ENCODE measurements at regions of chr15 and their contacts with region 1.

Region 1: DNA sequence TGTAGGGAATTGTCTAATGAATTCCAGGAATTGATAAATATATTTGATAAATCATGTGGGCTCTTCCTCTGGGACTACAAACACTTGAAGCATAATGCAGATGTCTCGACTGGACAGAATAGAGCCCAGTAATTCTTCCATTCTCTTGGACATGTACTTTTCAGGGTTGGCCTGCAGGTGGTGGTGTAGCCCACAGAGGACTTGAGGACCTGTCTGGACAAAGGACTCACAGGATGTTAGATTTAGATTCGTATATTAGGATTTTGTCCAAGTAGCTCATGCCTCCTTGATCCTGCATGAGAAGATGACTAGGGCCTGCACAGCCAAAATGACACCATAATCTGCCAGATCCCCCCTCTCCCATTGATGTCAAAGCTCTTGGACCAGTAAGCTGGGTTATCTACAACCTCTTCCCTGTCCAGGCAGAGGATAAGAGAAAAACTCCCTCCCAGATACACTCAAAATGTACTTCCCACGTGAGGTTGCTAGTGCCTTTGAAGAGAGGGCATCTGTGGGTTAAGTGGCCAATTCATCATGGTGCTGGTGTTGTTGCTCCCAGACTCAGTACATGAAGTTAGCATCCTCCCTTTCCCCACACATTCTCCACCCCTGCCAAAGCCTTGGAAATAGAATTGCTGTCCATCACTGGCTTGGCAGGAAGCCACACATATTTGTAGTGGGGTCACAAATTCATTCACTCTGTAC is 88.6 kb upstream of the ZNF280D start:
- DNase-seq: peak; percentile 78
- H3K4me3 ChIP-seq: no peak overlapping the region
- H3K27ac ChIP-seq: no peak overlapping the region
- H3K4me1 ChIP-seq: peaks cover 0 to 7% (median 2%) of the 10 kb centered on the region in 6 donors
- H3K27me3 ChIP-seq: no peaks in the 10 kb centered on the region
- CTCF ChIP-seq: peak in 10 of 11 experiments; percentile 18 to 79 (median 64)
- POLR2A ChIP-seq: no peak

Region 2: GRCh38 chr15:56307126-56307525 is 514.7 kb before region 1 on chr15:
- intact Hi-C with region 1: no loop called
- DNase-seq: no peak
- H3K4me3 ChIP-seq: no peak overlapping the region
- H3K27ac ChIP-seq: no peak overlapping the region
- H3K4me1 ChIP-seq: no peaks in the 10 kb centered on the region
- H3K27me3 ChIP-seq: no peaks in the 10 kb centered on the region
- CTCF ChIP-seq: no peak
- POLR2A ChIP-seq: no peak

Region 3: GRCh38 chr15:57306161-57306943 is 484.5 kb after region 1 on chr15:
- intact Hi-C with region 1: loop called (anchors 5 kb)
- DNase-seq: peak; percentile 96
- H3K4me3 ChIP-seq: peak overlapping the region; percentile 33 to 70 (median 44)
- H3K27ac ChIP-seq: peak overlapping the region in 4 of 8 donors; percentile 9 to 67 (median 50)
- H3K4me1 ChIP-seq: peaks cover 7 to 50% (median 17%) of the 10 kb centered on the region in 6 donors
- H3K27me3 ChIP-seq: peaks cover 0 to 6% (median 0%) of the 10 kb centered on the region in 7 donors
- CTCF ChIP-seq: peak; percentile 50 to 93 (median 84)
- POLR2A ChIP-seq: no peak